ENCODE measurements at regions of chr17 and their contacts with region 1.

Region 1: GRCh38 chr17:81911277-81911961 is at the start of gene PCYT2:
- DNase-seq: peak; percentile 89
- H3K4me3 Mint-ChIP-seq: peak within 1 kb of the TSS; percentile 72
- H3K27ac Mint-ChIP-seq: no peak within 1 kb of the TSS
- H3K4me1 Mint-ChIP-seq: peaks cover 27% of the 10 kb centered on the region
- H3K27me3 Mint-ChIP-seq: no peaks in the 10 kb centered on the region
- CTCF ChIP-seq: no peak
- total RNA-seq, gene PCYT2: 26.5 and 26.8 TPM in 2 replicates

Region 2: GRCh38 chr17:81860756-81861518 is 50.5 kb before region 1 on chr17:
- CTCF ChIA-PET with region 1: no interaction called
- POLR2A ChIA-PET with region 1: interaction called, 3 read pairs
- intact Hi-C with region 1: loop called (anchors 10 kb)
- DNase-seq: peak; percentile 100
- H3K4me3 Mint-ChIP-seq: peak overlapping the region; percentile 89
- H3K27ac Mint-ChIP-seq: peak overlapping the region; percentile 98
- H3K4me1 Mint-ChIP-seq: peaks cover 33% of the 10 kb centered on the region
- H3K27me3 Mint-ChIP-seq: no peaks in the 10 kb centered on the region
- CTCF ChIP-seq: no peak